BJ (cell line): ENCODE measurements at regions of chr10 and their contacts with region 1.

Region 1: GRCh38 chr10:93816123-93816747 is 58.5 kb downstream of the LGI1 start:
- DNase-seq: peak; percentile 22
- H3K4me3 ChIP-seq: no peak overlapping the region
- H3K27me3 ChIP-seq: peaks cover 6% of the 10 kb centered on the region
- CTCF ChIP-seq: peak; percentile 72

Region 2: DNA sequence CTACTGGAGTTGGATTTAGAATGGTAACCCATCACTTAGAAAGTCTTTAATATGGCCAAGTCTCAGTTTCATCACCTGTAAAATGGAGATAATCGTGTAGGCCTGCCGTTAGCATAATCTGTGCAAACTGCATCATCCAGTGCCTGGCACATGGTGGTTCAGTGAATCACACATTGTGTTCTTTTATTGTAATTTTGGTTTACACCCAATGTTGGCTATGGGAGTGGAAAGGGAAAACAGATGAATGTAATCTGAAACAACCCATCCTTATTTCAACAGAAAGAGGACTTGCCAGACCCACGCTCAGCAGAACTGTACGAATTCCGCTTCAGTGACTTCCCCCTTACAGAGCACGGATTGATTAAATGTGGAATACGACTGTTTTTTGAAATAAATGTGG is 176.4 kb before region 1 on chr10:
- CTCF ChIA-PET with region 1: no interaction called
- POLR2A ChIA-PET with region 1: no interaction called
- DNase-seq: no peak
- H3K4me3 ChIP-seq: no peak overlapping the region
- H3K27me3 ChIP-seq: peaks cover 1% of the 10 kb centered on the region; the same call in 1 of the 2 replicates
- CTCF ChIP-seq: no peak

Region 3: DNA sequence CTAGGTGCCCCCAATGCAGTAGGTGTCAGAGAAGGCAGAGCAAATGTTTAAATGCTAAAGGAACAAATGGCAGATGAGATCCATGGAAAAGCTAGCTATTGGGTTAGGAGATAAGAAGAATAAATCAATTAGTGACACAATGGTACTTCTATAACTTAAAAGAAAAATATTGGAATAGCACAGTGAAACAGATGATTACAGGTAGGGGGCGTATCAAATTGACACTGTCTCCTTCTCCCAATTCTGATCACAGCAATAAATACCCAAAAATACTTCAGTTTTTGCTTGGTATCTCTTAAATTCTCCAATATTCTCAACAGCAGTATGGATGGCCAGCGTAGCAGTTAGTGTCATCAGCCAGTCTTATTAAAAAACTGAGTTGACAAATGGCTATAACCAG is 119.0 kb before region 1 on chr10:
- CTCF ChIA-PET with region 1: interaction called, 21 read pairs
- POLR2A ChIA-PET with region 1: interaction called, 3 read pairs
- DNase-seq: no peak
- H3K4me3 ChIP-seq: no peak overlapping the region
- H3K27me3 ChIP-seq: no peaks in the 10 kb centered on the region
- CTCF ChIP-seq: no peak

Region 4: GRCh38 chr10:93746844-93747284 is 69.4 kb before region 1 on chr10:
- CTCF ChIA-PET with region 1: interaction called, 81 read pairs
- POLR2A ChIA-PET with region 1: no interaction called
- DNase-seq: peak; percentile 98
- H3K4me3 ChIP-seq: no peak overlapping the region
- H3K27me3 ChIP-seq: no peaks in the 10 kb centered on the region; the same call in 1 of the 2 replicates
- CTCF ChIP-seq: peak; percentile 26; the same call in 1 of the 2 replicates

Region 5: DNA sequence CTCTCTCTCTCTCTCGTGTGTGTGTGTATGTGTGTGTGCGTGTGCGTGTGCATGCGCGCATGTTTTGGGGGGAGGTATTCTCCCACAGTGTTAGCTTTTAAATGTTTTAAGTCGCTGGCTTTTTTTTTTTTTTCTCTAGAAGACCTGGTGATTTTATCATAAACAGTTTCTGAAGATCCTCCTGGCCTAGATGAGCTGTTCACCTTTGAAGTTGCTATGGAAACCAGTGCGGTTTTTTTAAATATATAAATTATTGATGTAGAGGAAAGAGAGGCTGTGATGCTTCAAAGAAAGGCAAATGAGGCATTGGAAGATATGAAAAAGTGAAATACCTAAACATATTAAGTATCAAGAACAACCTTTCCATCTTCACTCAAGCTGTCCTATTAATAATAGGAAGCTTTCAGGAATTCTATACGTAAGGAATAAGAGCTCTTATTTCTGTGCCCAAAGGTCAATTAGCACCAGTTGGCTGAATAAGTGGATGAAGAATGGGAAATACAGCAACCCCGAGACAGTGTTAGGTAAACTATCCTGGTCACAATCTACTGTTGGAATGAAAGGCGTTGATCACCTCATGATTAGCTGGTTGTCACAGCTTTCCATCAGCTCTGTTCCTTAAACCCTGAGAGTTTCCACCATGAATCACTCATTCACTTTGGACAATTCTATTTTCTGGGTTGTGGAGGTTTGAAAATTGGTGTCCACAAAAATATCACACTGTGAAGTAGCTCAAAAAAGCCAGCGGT is 11.0 kb after region 1 on chr10:
- CTCF ChIA-PET with region 1: interaction called, 12 read pairs
- POLR2A ChIA-PET with region 1: no interaction called
- DNase-seq: no peak
- H3K4me3 ChIP-seq: no peak overlapping the region
- H3K27me3 ChIP-seq: peaks cover 3% of the 10 kb centered on the region; the same call in 1 of the 2 replicates
- CTCF ChIP-seq: no peak